HCT116 (cell line): ENCODE measurements at regions of chr3 and their contacts with region 1.

Region 1: GRCh38 chr3:187223799-187224198 is 26.5 kb downstream of the RTP1 start:
- DNase-seq: no peak
- ATAC-seq: no peak
- H3K4me3 ChIP-seq: no peak overlapping the region
- H3K27ac ChIP-seq: no peak overlapping the region
- H3K4me1 ChIP-seq: peaks cover 0 to 6% of the 10 kb centered on the region in 2 experiments; a peak in 2 of 4 replicates
- H3K27me3 ChIP-seq: no peaks in the 10 kb centered on the region; the same call in 1 of the 2 replicates
- CTCF ChIP-seq: no peak
- POLR2A ChIP-seq: no peak
- RAD21 ChIP-seq: no peak

Region 2: GRCh38 chr3:187291001-187291511 is 67.3 kb after region 1 on chr3:
- CTCF ChIA-PET with region 1: interaction called, 4 read pairs
- POLR2A ChIA-PET with region 1: no interaction called
- RAD21 ChIA-PET with region 1: no interaction called
- intact Hi-C with region 1: loop called (anchors 2 kb)
- DNase-seq: no peak
- ATAC-seq: no peak
- H3K4me3 ChIP-seq: no peak overlapping the region
- H3K27ac ChIP-seq: no peak overlapping the region
- H3K4me1 ChIP-seq: no peaks in the 10 kb centered on the region
- H3K27me3 ChIP-seq: peaks cover 14% of the 10 kb centered on the region; the same call in 1 of the 2 replicates
- CTCF ChIP-seq: no peak
- POLR2A ChIP-seq: no peak
- RAD21 ChIP-seq: no peak

Region 3: DNA sequence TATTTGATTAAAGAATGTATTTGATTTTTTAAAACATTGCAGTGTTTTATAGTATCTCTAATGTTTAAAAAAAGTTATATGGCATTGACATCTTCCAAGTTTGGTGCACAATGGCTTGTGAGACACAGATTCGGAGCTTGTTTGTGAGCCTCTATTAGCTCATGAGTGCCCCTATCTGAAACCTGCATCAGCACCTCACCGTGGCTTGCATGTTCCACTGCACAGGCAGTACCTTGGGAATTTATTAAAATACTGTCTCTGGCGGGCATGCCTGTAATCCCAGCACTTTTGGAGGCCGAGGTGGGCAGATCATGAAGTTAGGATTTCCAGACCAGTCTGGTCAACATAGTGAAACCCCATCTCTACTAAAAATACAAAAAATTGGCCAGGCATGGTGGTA is 485.4 kb after region 1 on chr3:
- CTCF ChIA-PET with region 1: interaction called, 17 read pairs
- POLR2A ChIA-PET with region 1: no interaction called
- RAD21 ChIA-PET with region 1: no interaction called
- intact Hi-C with region 1: loop called (anchors 1 kb)
- DNase-seq: peak; percentile 31
- ATAC-seq: peak; percentile 98
- H3K4me3 ChIP-seq: no peak overlapping the region
- H3K27ac ChIP-seq: no peak overlapping the region
- H3K4me1 ChIP-seq: peaks cover 0 to 5% of the 10 kb centered on the region in 2 experiments; a peak in 2 of 4 replicates
- H3K27me3 ChIP-seq: no peaks in the 10 kb centered on the region
- CTCF ChIP-seq: peak; percentile 52 to 68 (median 65); a peak in 5 of 6 replicates
- POLR2A ChIP-seq: no peak
- RAD21 ChIP-seq: peak; percentile 29; the same call in 1 of the 2 replicates

Region 4: DNA sequence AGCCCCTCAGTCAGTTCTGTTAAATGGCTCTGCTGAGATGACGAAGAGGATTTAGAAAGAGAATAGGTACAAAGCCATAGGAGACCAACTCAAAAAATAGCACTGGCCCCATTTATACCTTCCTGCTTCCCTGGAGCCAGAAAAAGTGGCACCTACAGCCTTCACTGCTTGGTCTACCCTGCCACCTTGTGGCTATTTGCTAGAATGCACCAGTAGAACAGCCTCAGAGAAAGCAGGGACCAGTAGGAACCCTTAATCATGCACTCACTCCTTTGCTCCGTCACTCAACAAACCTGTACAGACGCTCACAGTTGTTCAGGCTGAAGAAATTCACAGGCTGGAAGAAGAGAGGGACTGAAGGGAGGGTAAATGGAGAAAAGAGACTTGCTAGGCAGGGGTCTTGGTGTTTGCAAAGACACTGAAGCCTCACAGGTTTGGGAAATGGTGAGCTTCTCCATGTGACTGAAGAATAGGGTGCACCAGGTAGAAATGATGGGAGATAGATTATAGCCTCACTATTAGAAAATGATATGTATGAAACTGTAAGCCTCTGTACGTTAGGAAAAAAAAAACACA is 490.7 kb after region 1 on chr3:
- CTCF ChIA-PET with region 1: interaction called, 17 read pairs
- POLR2A ChIA-PET with region 1: no interaction called
- RAD21 ChIA-PET with region 1: interaction called in 1 of 2 experiments, 5 read pairs
- intact Hi-C with region 1: loop called (anchors 1 kb)
- DNase-seq: peak; percentile 72
- ATAC-seq: peak; percentile 96
- H3K4me3 ChIP-seq: no peak overlapping the region
- H3K27ac ChIP-seq: no peak overlapping the region
- H3K4me1 ChIP-seq: peaks cover 3% of the 10 kb centered on the region in 2 experiments; a peak in 2 of 4 replicates
- H3K27me3 ChIP-seq: no peaks in the 10 kb centered on the region
- CTCF ChIP-seq: peak; percentile 85 to 95 (median 93)
- POLR2A ChIP-seq: no peak
- RAD21 ChIP-seq: peak; percentile 97